Left ventricle myocardium superior (tissue), 1 donor: ENCODE measurements at regions of chr12 and their contacts with region 1.

Region 1: GRCh38 chr12:92349635-92350034 is 204.0 kb upstream of the BTG1 start:
- DNase-seq: no peak
- ATAC-seq: no peak

Region 2: GRCh38 chr12:92312463-92312964 is 37.1 kb before region 1 on chr12:
- intact Hi-C with region 1: loop called (anchors 5 kb)
- DNase-seq: no peak
- ATAC-seq: peak; percentile 52